ENCODE measurements at regions of chr17 and their contacts with region 1.

Region 1: DNA sequence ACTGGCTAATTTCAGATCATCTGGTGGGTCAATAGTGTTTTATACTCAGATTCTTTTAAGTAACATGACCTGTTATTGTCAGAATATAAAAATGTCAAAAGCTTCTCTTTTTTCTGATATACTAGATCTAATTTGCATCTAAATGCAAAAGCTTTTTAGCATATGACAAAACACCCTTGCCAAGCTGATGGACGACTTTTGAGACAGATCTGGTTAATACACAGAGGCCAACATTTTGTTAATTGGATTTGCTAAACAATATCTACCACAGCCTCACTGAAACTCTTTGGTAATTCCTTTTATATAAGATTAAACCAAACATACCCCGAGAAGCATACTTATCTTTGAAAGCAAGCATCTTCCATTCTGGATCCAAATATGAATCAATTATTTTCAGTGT is 10.3 kb upstream of the NOL11 start:
- DNase-seq: no peak
- H3K4me3 ChIP-seq: no peak overlapping the region
- CTCF ChIP-seq: no peak

Region 2: GRCh38 chr17:67689534-67690177 is 17.8 kb before region 1 on chr17:
- CTCF ChIA-PET with region 1: interaction called, 15 read pairs
- POLR2A ChIA-PET with region 1: no interaction called
- DNase-seq: peak; percentile 10
- H3K4me3 ChIP-seq: no peak overlapping the region
- CTCF ChIP-seq: peak; percentile 58

Region 3: DNA sequence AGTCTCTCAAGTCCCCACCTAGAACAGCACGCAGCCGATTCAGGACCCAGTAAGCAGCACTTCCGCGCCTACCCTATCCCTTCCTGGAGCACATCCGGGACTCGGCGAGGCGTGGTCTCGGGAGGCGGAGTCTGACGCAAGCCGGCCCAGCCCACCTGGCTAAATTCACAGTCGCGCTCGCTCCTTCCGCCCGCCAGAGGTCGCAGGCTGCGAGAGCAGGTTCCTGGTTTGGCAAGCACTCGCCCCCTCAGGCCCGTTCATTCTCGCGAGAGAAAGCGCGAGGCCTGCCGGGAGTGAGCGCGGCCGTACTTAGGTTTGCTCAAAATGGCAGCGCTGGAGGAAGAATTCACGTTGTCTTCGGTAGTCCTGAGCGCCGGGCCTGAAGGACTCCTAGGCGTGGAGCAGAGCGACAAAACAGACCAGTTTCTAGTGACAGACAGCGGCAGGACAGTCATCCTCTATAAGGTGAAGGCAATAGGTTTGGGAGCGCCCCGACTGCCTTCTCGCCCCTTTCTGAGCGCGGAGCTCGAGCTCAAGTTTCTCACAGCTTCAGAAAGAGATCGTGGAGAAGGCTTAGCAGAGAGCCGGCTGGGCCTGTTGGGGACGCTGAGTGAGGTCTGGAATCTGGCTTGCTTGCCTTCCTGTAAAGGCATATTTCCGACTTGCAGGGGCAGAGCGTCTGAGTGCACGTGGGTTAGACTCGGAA is 10.3 kb after region 1 on chr17 and contains the start of gene NOL11:
- CTCF ChIA-PET with region 1: interaction called, 15 read pairs
- POLR2A ChIA-PET with region 1: no interaction called
- DNase-seq: peak; percentile 86
- H3K4me3 ChIP-seq: peak within 1 kb of the TSS; percentile 98
- CTCF ChIP-seq: peak; percentile 98

Measured in AG04449 (cell line).